ENCODE measurements at regions of chr13 and their contacts with region 1.

Region 1: GRCh38 chr13:75258159-75258782 is 223.7 kb downstream of the TBC1D4 start:
- DNase-seq: no peak
- H3K4me3 ChIP-seq: no peak overlapping the region
- CTCF ChIP-seq: peak; percentile 32

Region 2: DNA sequence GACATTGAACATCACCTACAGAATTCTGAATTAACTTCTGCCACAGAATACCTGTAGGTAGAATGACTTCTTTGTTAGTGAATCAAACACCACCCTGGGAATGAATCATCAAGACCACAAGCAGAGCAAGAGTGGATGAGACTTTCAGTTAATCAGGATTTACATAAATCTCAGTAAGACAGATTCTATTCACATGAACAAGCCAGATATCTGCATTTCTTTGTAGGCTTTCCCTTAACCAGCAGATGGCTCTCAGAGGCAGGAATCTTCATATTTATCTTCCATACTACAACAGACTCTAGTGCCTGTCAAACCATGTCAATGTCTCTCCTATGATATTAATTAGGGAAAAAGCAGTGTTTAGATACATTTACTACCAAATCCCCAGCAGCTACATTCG is 1536.2 kb before region 1 on chr13:
- CTCF ChIA-PET with region 1: interaction called, 14 read pairs
- POLR2A ChIA-PET with region 1: no interaction called
- DNase-seq: no peak
- H3K4me3 ChIP-seq: no peak overlapping the region
- CTCF ChIP-seq: peak; percentile 42

Region 3: GRCh38 chr13:75050419-75051046 is 207.7 kb before region 1 on chr13:
- CTCF ChIA-PET with region 1: no interaction called
- POLR2A ChIA-PET with region 1: no interaction called
- DNase-seq: peak; percentile 24
- H3K4me3 ChIP-seq: no peak overlapping the region
- CTCF ChIP-seq: no peak